T-cell (primary cell): ENCODE measurements at regions of chr18 and their contacts with region 1.

Region 1: GRCh38 chr18:44743631-44744030 is 62.9 kb downstream of the SETBP1 start:
- DNase-seq: no peak
- ATAC-seq: no peak
- H3K4me3 ChIP-seq: no peak overlapping the region
- H3K4me3 Mint-ChIP-seq: no peak overlapping the region
- H3K27ac ChIP-seq: no peak overlapping the region
- H3K27ac Mint-ChIP-seq: no peak overlapping the region
- H3K4me1 ChIP-seq: no peaks in the 10 kb centered on the region
- H3K4me1 Mint-ChIP-seq: no peaks in the 10 kb centered on the region
- H3K27me3 ChIP-seq: no peaks in the 10 kb centered on the region
- H3K27me3 Mint-ChIP-seq: peaks cover 0 to 2% of the 10 kb centered on the region in 2 donors

Region 2: GRCh38 chr18:44803019-44803650 is 59.5 kb after region 1 on chr18:
- CTCF ChIA-PET with region 1: no interaction called
- POLR2A ChIA-PET with region 1: interaction called in 1 of 2 experiments, 11 read pairs
- DNase-seq: no peak
- ATAC-seq: no peak
- H3K4me3 ChIP-seq: no peak overlapping the region
- H3K4me3 Mint-ChIP-seq: no peak overlapping the region
- H3K27ac ChIP-seq: no peak overlapping the region
- H3K27ac Mint-ChIP-seq: no peak overlapping the region
- H3K4me1 ChIP-seq: peaks cover 0 to 14% of the 10 kb centered on the region in 2 experiments
- H3K4me1 Mint-ChIP-seq: peaks cover 0 to 22% (median 5%) of the 10 kb centered on the region in 3 donors
- H3K27me3 ChIP-seq: no peaks in the 10 kb centered on the region
- H3K27me3 Mint-ChIP-seq: peaks cover 0 to 2% of the 10 kb centered on the region in 2 donors